Mucosa of descending colon (tissue), 3 donors: ENCODE measurements at regions of chr5 and their contacts with region 1.

Region 1: GRCh38 chr5:61089351-61089750 is 72.9 kb downstream of the SMIM15 start:
- DNase-seq: no peak
- ATAC-seq: no peak
- H3K4me3 ChIP-seq: no peak overlapping the region
- H3K4me1 ChIP-seq: no peaks in the 10 kb centered on the region
- CTCF ChIP-seq: no peak

Region 2: DNA sequence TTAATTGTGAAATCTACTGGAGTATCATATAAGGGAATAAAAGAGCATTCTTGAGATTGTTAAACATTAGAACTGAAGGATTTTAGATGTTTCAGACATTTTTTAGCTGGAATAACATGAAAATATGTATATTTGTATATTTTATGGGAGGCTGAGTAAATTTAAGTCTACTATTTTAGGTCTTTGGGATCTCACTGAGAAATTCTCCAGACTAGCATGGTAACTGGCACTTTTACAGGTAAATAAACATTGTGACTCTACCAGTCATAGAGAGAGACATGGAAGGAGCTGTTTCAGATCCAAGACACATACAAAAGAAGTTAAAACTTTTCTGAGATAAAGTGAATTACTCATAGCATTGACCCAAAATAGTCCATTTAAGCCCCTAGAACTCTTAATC is 84.9 kb before region 1 on chr5:
- intact Hi-C with region 1: no loop called
- DNase-seq: no peak
- ATAC-seq: no peak
- H3K4me3 ChIP-seq: no peak overlapping the region
- H3K4me1 ChIP-seq: no peaks in the 10 kb centered on the region
- CTCF ChIP-seq: no peak

Region 3: GRCh38 chr5:61020415-61020814 is 68.9 kb before region 1 on chr5:
- intact Hi-C with region 1: no loop called
- DNase-seq: no peak
- ATAC-seq: no peak
- H3K4me3 ChIP-seq: no peak overlapping the region
- H3K4me1 ChIP-seq: no peaks in the 10 kb centered on the region
- CTCF ChIP-seq: no peak

Region 4: GRCh38 chr5:61371516-61371915 is 282.2 kb after region 1 on chr5:
- intact Hi-C with region 1: no loop called
- DNase-seq: no peak
- ATAC-seq: no peak
- H3K4me3 ChIP-seq: no peak overlapping the region
- H3K4me1 ChIP-seq: peaks cover 5% of the 10 kb centered on the region
- CTCF ChIP-seq: no peak

Region 5: GRCh38 chr5:61599370-61600122 is 510.2 kb after region 1 on chr5:
- intact Hi-C with region 1: loop called in 1 of 2 experiments (anchors 5 kb)
- DNase-seq: peak in 1 of 3 donors; percentile 13
- ATAC-seq: peak; percentile 69
- H3K4me3 ChIP-seq: no peak overlapping the region
- H3K4me1 ChIP-seq: no peaks in the 10 kb centered on the region
- CTCF ChIP-seq: no peak